Activated naive CD4-positive, alpha-beta T cell treated with anti-CD3 and anti-CD28 coated beads for 36 hours (primary cell): ENCODE measurements at regions of chr9 and their contacts with region 1.

Region 1: DNA sequence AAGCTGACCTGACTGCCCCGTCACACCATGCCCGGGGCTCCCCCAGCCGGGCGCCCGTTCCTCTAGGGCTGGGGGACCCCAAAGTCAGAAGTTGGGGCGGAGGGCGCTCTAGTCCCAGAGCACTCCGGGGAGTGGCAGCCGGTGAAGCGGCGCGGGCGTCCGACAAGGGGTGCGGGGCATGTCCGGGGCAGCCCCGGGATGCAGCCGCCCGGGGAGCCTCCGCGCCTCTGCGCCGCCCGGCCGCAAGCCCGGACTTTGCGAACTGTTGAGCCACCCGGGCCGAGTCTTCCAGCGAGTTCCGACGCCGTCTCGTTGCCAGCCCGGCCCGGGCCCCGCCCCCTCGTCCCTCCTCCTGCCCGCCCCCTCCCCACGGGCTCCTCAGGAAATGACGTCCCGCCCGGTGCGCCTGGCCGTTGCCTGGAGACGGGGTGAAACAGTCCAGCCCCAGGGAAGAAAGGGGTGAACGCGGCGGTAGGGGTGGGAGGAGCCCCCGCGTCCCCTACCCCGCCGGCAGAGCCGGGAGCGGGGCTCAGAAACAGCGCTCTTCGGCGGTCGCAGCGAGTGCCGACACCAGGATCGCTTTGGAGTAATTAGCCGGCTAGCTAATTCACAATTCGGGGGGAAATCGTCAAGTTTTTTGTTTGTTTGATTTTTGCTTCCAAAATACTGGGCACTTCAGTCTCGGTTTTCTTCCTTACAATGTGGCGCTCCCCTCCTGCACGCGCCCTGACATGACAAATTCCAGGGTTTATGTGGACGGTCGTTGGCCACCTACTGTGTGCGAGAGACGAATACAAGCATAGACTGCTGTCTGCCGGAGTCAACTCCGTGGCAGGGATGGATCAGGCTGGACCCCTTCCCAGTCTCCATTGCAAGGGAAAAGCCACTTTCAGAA is at the start of gene WHRN:
- DNase-seq: peak; percentile 90
- H3K4me3 Mint-ChIP-seq: peak within 1 kb of the TSS; percentile 76
- H3K27ac Mint-ChIP-seq: no peak within 1 kb of the TSS
- H3K4me1 Mint-ChIP-seq: peaks cover 5% of the 10 kb centered on the region
- H3K27me3 Mint-ChIP-seq: peaks cover 15% of the 10 kb centered on the region
- total RNA-seq, gene WHRN: 1.9 to 2.1 TPM

Region 2: DNA sequence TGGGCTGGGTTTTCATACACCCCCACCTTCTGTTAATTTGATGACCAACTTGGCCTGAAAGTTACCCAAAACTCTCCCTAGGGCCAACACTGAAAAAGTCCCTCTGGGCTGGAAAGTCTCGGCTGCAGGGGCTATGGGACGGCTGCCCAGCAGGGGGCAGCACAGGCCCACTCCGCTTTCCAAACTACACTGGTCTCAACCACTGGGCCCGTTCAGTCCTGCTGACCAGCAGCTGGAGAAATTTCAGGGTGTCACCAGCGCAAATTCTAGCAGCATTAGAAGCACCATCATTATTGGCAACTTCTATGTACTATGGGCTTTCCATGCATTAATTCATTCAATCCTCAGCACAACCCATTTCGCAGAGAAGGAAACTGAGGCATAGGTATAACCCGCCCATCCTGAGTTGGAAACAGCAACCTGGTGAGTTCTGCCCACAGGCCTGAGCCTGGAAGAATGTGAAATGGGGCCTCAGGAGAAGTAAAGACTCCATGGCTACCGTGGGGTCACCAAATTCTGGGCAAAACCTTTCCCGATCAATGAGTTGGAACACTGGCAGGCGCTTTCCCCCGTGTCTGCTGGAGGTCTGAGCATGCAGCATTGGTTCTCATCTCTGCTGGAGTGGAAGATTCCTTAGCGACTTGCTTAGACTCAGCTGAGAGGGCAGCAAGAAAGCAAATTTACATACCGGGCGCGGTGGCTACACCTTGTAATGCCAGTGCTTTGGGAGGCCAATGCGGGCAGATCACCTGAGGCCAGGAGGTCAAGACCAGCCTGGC is 166.1 kb before region 1 on chr9:
- CTCF ChIA-PET with region 1: interaction called, 4 read pairs
- intact Hi-C with region 1: loop called (anchors 1 kb)
- DNase-seq: peak; percentile 66
- H3K4me3 Mint-ChIP-seq: no peak overlapping the region
- H3K27ac Mint-ChIP-seq: peak overlapping the region; percentile 66
- H3K4me1 Mint-ChIP-seq: peaks cover 15% of the 10 kb centered on the region
- H3K27me3 Mint-ChIP-seq: no peaks in the 10 kb centered on the region

Region 3: GRCh38 chr9:114434878-114435311 is 70.5 kb before region 1 on chr9:
- CTCF ChIA-PET with region 1: interaction called, 8 read pairs
- intact Hi-C with region 1: loop called (anchors 1 kb)
- DNase-seq: peak; percentile 37
- H3K4me3 Mint-ChIP-seq: no peak overlapping the region
- H3K27ac Mint-ChIP-seq: no peak overlapping the region
- H3K4me1 Mint-ChIP-seq: peaks cover 2% of the 10 kb centered on the region
- H3K27me3 Mint-ChIP-seq: no peaks in the 10 kb centered on the region